ENCODE measurements at regions of chr22 and their contacts with region 1.

Region 1: GRCh38 chr22:49434101-49434611 is 393.5 kb downstream of the BRD1 start:
- DNase-seq: peak; percentile 71
- H3K4me3 Mint-ChIP-seq: no peak overlapping the region
- H3K27ac Mint-ChIP-seq: no peak overlapping the region
- H3K4me1 Mint-ChIP-seq: no peaks in the 10 kb centered on the region
- H3K27me3 Mint-ChIP-seq: peaks cover 63% of the 10 kb centered on the region
- CTCF ChIP-seq: peak; percentile 37

Region 2: GRCh38 chr22:49632199-49633009 is 198.2 kb after region 1 on chr22:
- CTCF ChIA-PET with region 1: interaction called, 20 read pairs
- intact Hi-C with region 1: loop called (anchors 2 kb)
- DNase-seq: peak; percentile 80
- H3K4me3 Mint-ChIP-seq: peak overlapping the region; percentile 42
- H3K27ac Mint-ChIP-seq: no peak overlapping the region
- H3K4me1 Mint-ChIP-seq: no peaks in the 10 kb centered on the region
- H3K27me3 Mint-ChIP-seq: peaks cover 89% of the 10 kb centered on the region
- CTCF ChIP-seq: peak; percentile 92

Region 3: GRCh38 chr22:49789289-49790141 is 355.4 kb after region 1 on chr22:
- CTCF ChIA-PET with region 1: no interaction called
- intact Hi-C with region 1: no loop called
- DNase-seq: no peak
- H3K4me3 Mint-ChIP-seq: no peak overlapping the region
- H3K27ac Mint-ChIP-seq: no peak overlapping the region
- H3K4me1 Mint-ChIP-seq: peaks cover 9% of the 10 kb centered on the region
- H3K27me3 Mint-ChIP-seq: no peaks in the 10 kb centered on the region
- CTCF ChIP-seq: no peak